HCT116 (cell line): ENCODE measurements at regions of chr1 and their contacts with region 1.

Region 1: DNA sequence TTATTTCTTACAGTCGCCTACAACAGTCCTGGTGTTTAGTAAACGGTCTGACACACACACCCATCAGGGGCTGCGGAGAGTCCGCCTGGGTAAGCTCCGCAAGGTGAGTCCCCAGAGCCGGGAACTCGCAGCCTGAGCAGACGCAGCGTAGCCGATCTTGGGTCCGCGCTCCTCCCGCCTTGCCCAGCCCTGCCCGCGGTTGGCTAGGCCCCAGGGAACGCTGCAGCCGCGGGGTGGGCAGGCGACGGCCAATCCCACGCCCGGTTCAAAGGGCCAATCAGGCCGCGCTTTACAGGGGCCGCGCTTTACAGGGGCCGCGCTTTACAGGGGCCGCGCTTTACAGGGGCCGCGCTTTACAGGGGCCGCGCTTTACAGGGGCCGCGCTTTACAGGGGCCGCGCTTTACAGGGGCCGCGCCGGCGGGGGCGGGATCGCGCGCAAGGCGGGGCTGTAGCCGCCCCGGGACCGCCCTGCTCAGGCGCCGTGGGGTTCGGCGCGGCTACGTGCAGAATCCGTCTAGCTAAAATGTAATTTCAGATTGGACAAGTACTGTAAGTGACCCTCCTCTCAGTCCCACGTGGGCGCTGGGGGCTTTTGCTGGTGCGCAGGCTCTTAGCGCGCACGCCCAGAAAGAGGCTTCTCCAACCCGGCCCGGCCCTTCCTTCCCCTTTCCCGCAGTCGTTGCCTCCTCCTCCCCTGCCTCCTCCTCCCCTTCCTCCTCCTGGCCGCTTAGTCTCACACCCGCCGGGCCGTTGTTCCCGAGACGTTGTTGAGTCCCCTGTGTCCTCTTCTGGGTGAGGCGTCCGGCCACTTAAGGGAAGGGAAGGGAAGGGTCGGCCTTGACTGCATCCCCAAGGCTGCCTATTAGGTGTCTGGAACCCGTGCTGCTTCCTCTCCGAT is at the start of gene FGGY:
- DNase-seq: peak; percentile 94
- ATAC-seq: peak; percentile 89
- H3K4me3 ChIP-seq: peak within 1 kb of the TSS; percentile 67 to 71
- H3K27ac ChIP-seq: peak within 1 kb of the TSS; percentile 85
- H3K4me1 ChIP-seq: peaks cover 23 to 48% of the 10 kb centered on the region in 2 experiments
- H3K27me3 ChIP-seq: no peaks in the 10 kb centered on the region
- CTCF ChIP-seq: no peak
- POLR2A ChIP-seq: peak; percentile 77
- RAD21 ChIP-seq: 0 out of 2 replicates have a peak, but pooled peaks have one; percentile 5
- total RNA-seq, gene FGGY: 10.6 TPM

Region 2: GRCh38 chr1:58739856-58740466 is 556.6 kb before region 1 on chr1:
- CTCF ChIA-PET with region 1: no interaction called
- POLR2A ChIA-PET with region 1: no interaction called
- RAD21 ChIA-PET with region 1: no interaction called
- intact Hi-C with region 1: loop called (anchors 5 kb)
- DNase-seq: peak; percentile 39
- ATAC-seq: peak; percentile 75; the same call in 1 of the 2 replicates
- H3K4me3 ChIP-seq: no peak overlapping the region
- H3K27ac ChIP-seq: no peak overlapping the region
- H3K4me1 ChIP-seq: no peaks in the 10 kb centered on the region; a peak in 1 of 4 replicates
- H3K27me3 ChIP-seq: no peaks in the 10 kb centered on the region
- CTCF ChIP-seq: peak; percentile 59 to 87 (median 83)
- POLR2A ChIP-seq: no peak
- RAD21 ChIP-seq: peak; percentile 96

Region 3: GRCh38 chr1:58883037-58883887 is 413.3 kb before region 1 on chr1:
- CTCF ChIA-PET with region 1: no interaction called
- POLR2A ChIA-PET with region 1: no interaction called
- RAD21 ChIA-PET with region 1: no interaction called
- intact Hi-C with region 1: loop called (anchors 10 kb)
- DNase-seq: peak; percentile 85
- ATAC-seq: peak; percentile 63
- H3K4me3 ChIP-seq: peak overlapping the region in 1 of 2 experiments; percentile 14; a peak in 2 of 4 replicates
- H3K27ac ChIP-seq: peak overlapping the region; percentile 53
- H3K4me1 ChIP-seq: peaks cover 48 to 56% of the 10 kb centered on the region in 2 experiments
- H3K27me3 ChIP-seq: no peaks in the 10 kb centered on the region
- CTCF ChIP-seq: no peak
- POLR2A ChIP-seq: no peak
- RAD21 ChIP-seq: peak; percentile 34; the same call in 1 of the 2 replicates

Region 4: GRCh38 chr1:59150577-59151391 is 145.8 kb before region 1 on chr1:
- CTCF ChIA-PET with region 1: interaction called, 3 read pairs
- POLR2A ChIA-PET with region 1: no interaction called
- RAD21 ChIA-PET with region 1: no interaction called
- intact Hi-C with region 1: loop called (anchors 10 kb)
- DNase-seq: peak; percentile 56
- ATAC-seq: peak; percentile 82
- H3K4me3 ChIP-seq: peak overlapping the region; percentile 20 to 51
- H3K27ac ChIP-seq: no peak overlapping the region
- H3K4me1 ChIP-seq: peaks cover 10 to 34% of the 10 kb centered on the region in 2 experiments; a peak in 3 of 4 replicates
- H3K27me3 ChIP-seq: no peaks in the 10 kb centered on the region
- CTCF ChIP-seq: no peak
- POLR2A ChIP-seq: no peak
- RAD21 ChIP-seq: peak; percentile 20

Region 5: DNA sequence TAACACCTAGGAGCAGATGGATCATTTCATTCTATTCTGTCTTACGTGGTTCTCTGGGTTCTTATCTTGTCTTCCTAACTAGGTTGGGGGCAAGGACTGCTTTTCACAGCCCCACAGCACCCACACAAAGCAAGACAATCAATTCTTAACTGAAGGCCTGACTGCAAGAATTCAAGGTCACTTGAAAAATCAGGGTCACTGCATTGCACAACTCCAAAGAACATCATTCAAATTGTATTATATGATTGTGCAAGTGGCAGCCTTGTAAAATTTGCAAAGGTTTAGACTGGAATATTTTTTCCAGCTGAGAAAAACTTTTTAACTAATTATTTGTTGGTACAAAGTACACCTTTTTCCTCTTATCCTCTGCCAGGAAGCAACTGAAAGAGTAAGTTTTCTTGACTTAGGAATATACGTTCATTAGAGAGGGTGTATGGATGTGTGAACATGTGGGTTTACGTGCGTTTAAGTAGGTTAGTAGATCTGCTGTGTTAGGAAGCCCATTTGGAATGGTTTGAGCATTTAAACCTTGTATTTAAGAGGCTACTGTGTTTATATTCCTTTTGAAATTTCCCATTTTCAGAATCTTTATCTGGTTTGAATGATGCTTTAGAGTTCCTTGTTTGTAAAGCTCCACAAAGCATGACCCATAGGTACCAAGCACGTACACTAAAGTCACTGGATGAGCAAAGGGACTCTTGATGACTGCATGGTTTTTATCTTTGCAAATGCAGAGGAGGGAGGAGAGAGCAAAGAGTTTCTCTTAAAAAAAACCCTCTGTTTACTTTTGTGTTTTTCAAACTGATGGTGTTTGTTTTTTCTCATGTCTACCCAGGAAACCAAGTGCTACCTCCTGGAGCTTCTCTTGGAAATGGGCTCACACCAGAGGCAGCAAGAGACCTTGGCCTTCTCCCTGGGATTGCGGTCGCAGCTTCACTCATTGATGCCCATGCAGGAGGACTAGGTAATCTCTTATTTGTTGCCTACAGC is 215.2 kb after region 1 on chr1:
- CTCF ChIA-PET with region 1: no interaction called
- POLR2A ChIA-PET with region 1: no interaction called
- RAD21 ChIA-PET with region 1: no interaction called
- intact Hi-C with region 1: no loop called
- DNase-seq: no peak
- ATAC-seq: no peak
- H3K4me3 ChIP-seq: no peak overlapping the region
- H3K27ac ChIP-seq: no peak overlapping the region
- H3K4me1 ChIP-seq: no peaks in the 10 kb centered on the region
- H3K27me3 ChIP-seq: no peaks in the 10 kb centered on the region
- CTCF ChIP-seq: no peak
- POLR2A ChIP-seq: no peak
- RAD21 ChIP-seq: no peak

Region 6: DNA sequence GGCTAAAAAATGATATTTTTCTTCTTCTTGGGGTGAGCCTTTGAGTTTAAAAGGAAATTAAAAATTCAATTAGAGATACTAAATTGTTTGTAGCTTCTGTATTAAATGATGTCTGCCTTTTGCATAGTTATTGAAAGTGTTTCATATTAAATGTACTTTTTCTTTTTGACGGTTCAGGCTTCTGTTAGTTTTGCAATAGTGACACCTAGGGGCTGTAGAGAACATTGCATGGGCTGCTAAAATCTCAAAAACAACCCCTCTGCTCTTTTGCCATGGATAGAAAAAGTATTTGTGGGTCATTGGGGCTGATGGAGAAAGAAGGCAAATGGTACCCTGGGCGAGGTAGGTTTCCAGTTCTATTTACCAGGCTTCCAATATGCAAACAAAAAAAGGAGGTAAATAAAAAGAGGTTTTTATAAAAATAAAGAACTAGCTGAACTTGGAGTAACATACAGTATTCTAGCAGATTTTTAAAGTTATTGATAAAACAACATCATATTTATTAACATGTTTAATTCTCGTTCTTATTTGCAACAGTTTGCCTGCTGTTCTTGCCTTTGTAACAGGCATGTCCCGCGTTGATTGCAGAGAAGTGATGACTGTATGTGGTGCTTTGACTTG is 402.7 kb after region 1 on chr1:
- CTCF ChIA-PET with region 1: no interaction called
- POLR2A ChIA-PET with region 1: interaction called, 3 read pairs
- RAD21 ChIA-PET with region 1: no interaction called
- intact Hi-C with region 1: loop called (anchors 2 kb)
- DNase-seq: peak; percentile 15
- ATAC-seq: no peak
- H3K4me3 ChIP-seq: no peak overlapping the region
- H3K27ac ChIP-seq: no peak overlapping the region
- H3K4me1 ChIP-seq: no peaks in the 10 kb centered on the region
- H3K27me3 ChIP-seq: no peaks in the 10 kb centered on the region
- CTCF ChIP-seq: peak; percentile 67 to 93 (median 89); a peak in 5 of 6 replicates
- POLR2A ChIP-seq: no peak
- RAD21 ChIP-seq: peak; percentile 93